ENCODE measurements at regions of chrX and their contacts with region 1.

Region 1: GRCh38 chrX:30713061-30713525 is 59.9 kb downstream of the GK start:
- DNase-seq: peak; percentile 31
- H3K4me3 Mint-ChIP-seq: peak overlapping the region; percentile 59
- H3K27ac Mint-ChIP-seq: peak overlapping the region; percentile 85
- H3K4me1 Mint-ChIP-seq: peaks cover 53% of the 10 kb centered on the region
- H3K27me3 Mint-ChIP-seq: no peaks in the 10 kb centered on the region

Region 2: DNA sequence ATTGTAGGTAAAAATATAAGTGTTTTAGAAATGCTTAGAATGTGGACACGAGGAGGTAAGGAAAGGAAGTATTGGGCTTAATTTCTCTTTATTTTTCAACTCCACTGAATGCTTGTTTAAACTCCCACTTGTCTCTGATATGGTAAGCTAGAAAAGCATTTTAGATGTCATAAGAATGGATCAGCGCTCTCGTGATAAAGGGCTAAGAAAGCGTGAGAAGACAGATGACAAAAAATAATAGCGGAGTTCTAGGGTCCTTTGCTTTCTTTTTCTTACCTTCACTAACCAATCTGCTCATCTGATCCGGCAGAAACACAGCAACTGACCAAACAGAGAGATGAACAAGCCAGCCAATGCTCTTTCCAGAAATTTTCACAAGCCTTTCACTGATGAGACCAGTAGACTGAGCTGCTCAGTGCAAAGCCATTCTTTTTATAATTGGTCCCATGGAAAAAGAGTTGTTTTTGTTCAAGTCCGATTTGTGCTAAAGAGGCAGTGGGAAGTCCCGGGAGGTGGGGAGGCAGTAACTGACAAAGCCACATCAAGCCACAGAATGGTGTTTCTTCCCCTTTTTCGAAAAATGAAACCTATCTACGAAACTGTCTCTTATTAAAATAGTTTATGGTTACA is 135.6 kb before region 1 on chrX and contains the start of gene TASL:
- intact Hi-C with region 1: loop called (anchors 2 kb)
- DNase-seq: peak; percentile 39
- H3K4me3 Mint-ChIP-seq: peak within 1 kb of the TSS; percentile 96
- H3K27ac Mint-ChIP-seq: peak within 1 kb of the TSS; percentile 98
- H3K4me1 Mint-ChIP-seq: peaks cover 27% of the 10 kb centered on the region
- H3K27me3 Mint-ChIP-seq: no peaks in the 10 kb centered on the region
- total RNA-seq, gene TASL: 7.0 and 7.6 TPM in 2 replicates

Region 3: GRCh38 chrX:30607155-30607554 is 105.9 kb before region 1 on chrX:
- intact Hi-C with region 1: no loop called
- DNase-seq: no peak
- H3K4me3 Mint-ChIP-seq: no peak overlapping the region
- H3K27ac Mint-ChIP-seq: no peak overlapping the region
- H3K4me1 Mint-ChIP-seq: no peaks in the 10 kb centered on the region
- H3K27me3 Mint-ChIP-seq: peaks cover 9% of the 10 kb centered on the region

Region 4: DNA sequence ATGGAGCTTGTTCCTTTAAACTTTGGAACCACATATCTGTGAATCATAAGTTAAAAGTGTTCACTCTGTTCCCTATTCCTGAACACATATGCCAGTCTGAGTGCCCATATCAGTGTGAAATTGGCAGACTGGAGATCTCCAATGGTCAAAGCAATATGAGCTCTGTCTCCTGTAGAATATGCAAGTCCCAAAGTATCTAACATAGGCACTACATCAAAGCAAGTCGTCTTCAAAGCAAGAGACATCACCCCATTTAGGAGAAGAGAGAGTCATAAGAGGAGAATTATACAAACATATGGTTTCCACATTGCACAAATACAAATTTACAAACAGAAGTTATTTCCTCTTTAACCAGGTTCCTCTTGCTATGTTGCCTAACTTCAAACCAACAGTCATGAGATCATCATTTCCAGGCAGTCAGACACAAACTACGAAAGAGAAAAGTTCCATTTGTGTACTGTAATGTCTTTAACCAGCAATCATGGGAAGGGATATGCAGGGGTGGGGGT is 69.7 kb before region 1 on chrX:
- intact Hi-C with region 1: loop called (anchors 1 kb)
- DNase-seq: no peak
- H3K4me3 Mint-ChIP-seq: peak overlapping the region; percentile 22
- H3K27ac Mint-ChIP-seq: peak overlapping the region; percentile 99
- H3K4me1 Mint-ChIP-seq: peaks cover 38% of the 10 kb centered on the region
- H3K27me3 Mint-ChIP-seq: no peaks in the 10 kb centered on the region

Region 5: GRCh38 chrX:30659421-30659820 is 53.7 kb before region 1 on chrX:
- intact Hi-C with region 1: loop called (anchors 1 kb)
- DNase-seq: no peak
- H3K4me3 Mint-ChIP-seq: peak overlapping the region; percentile 25
- H3K27ac Mint-ChIP-seq: peak overlapping the region; percentile 69
- H3K4me1 Mint-ChIP-seq: peaks cover 48% of the 10 kb centered on the region
- H3K27me3 Mint-ChIP-seq: no peaks in the 10 kb centered on the region

Region 6: DNA sequence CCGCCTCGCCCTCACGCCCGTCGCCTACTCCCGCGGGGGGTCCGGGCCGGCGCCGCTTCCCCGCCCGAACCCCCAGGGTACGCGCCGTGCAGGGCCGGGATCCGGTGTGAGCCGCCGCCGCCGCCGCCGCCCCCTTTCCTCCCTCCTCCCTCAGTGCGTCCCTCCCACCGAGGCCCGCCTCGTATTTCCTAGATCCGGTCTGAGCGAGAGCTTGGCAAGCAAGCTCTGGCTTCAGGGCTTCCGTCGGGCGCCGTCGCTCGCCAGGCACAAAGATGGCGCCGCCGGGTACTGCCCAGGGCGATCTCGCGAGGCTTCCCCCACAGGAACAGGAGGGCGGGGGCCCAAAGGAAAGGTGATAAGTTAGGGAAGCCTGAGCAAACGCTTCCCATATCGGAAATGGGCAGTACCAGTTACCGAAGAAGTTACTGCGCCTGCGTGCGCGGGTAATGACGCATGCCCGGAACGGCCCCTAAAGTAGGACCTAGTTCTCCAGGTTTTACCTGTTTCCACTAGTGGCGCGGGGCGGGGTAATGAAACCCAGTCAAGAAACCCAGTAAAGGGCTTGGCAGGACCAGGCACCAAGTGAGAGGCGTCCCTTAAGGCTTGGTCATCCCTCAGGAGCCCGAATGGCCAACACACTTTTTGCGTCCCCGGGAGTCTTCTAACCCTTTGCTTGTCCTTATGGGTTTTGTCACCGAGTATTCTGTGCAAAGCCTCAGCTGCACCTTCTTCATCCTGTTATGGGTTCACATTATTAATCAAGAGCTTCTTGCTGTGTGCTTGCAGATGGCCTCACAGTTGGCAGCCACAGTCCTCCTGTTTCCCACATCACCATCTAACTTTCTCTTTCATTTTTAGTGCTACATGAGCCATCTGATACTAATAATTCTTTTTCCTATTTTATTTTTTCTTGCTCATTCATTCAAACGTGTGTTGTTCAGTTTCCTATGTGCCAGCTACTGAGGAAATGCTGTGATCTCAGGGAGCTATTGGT is 176.4 kb after region 1 on chrX and contains the start of gene TAB3:
- intact Hi-C with region 1: loop called (anchors 1 kb)
- DNase-seq: peak; percentile 91
- H3K4me3 Mint-ChIP-seq: peak within 1 kb of the TSS; percentile 90
- H3K27ac Mint-ChIP-seq: peak within 1 kb of the TSS; percentile 96
- H3K4me1 Mint-ChIP-seq: peaks cover 32% of the 10 kb centered on the region
- H3K27me3 Mint-ChIP-seq: no peaks in the 10 kb centered on the region
- total RNA-seq, gene TAB3: 23.7 and 24.4 TPM in 2 replicates